ENCODE measurements at regions of chr19 and their contacts with region 1.

Region 1: GRCh38 chr19:9768175-9769112 is at the start of gene ZNF846:
- DNase-seq: peak; percentile 90
- H3K4me3 Mint-ChIP-seq: peak within 1 kb of the TSS; percentile 87
- H3K27ac Mint-ChIP-seq: peak within 1 kb of the TSS; percentile 95
- H3K4me1 Mint-ChIP-seq: peaks cover 8% of the 10 kb centered on the region
- H3K27me3 Mint-ChIP-seq: no peaks in the 10 kb centered on the region
- total RNA-seq, gene ZNF846: 3.2 and 3.7 TPM in 2 replicates

Region 2: GRCh38 chr19:9309139-9309973 is 459.1 kb before region 1 on chr19 and contains the start of gene ZNF699:
- intact Hi-C with region 1: loop called (anchors 1 kb)
- DNase-seq: peak; percentile 98
- H3K4me3 Mint-ChIP-seq: peak within 1 kb of the TSS; percentile 79
- H3K27ac Mint-ChIP-seq: peak within 1 kb of the TSS; percentile 89
- H3K4me1 Mint-ChIP-seq: peaks cover 12% of the 10 kb centered on the region
- H3K27me3 Mint-ChIP-seq: no peaks in the 10 kb centered on the region
- total RNA-seq, gene ZNF699: 4.4 and 5.2 TPM in 2 replicates

Region 3: DNA sequence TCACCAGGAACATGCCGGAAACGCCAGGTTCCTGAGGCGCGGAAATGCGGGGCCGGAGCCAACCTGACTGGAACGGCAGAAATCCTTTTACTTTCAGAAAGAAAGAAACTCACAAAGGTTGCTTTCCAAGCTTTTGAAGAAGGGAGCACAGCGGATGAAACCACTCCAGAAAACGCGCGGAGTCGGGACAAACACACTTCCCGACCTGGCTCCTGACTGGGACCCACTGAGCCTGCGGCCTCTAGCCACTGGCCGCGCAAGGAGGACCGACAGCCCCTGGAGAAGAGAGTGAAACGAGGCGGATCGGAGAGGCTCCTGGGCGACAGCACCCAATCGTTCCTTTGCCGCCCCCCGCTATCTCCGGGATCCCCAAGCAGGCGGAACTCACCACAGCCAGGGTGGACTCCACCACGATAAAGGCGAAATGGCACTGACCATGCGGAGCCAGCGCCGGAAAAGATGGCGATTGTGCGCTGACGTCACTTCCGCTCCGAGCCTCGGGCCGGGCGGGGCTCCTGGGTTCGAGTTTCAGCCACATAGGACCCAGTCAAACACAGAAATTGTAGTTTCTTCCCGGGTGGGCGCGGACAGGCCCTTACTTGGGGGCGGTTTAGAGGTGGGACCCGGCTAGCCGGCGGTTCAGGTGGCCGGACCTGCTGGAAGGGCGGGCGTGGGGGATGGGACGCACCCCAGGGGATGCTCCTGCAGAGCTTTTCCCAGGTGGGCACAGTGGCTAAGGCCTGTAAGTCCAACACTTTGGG is 184.2 kb before region 1 on chr19 and contains the start of gene ZNF121:
- intact Hi-C with region 1: loop called (anchors 10 kb)
- DNase-seq: peak; percentile 77
- H3K4me3 Mint-ChIP-seq: peak within 1 kb of the TSS; percentile 91
- H3K27ac Mint-ChIP-seq: peak within 1 kb of the TSS; percentile 92
- H3K4me1 Mint-ChIP-seq: peaks cover 12% of the 10 kb centered on the region
- H3K27me3 Mint-ChIP-seq: peaks cover 2% of the 10 kb centered on the region
- total RNA-seq, gene ZNF121: 57.2 and 62.2 TPM in 2 replicates

Region 4: DNA sequence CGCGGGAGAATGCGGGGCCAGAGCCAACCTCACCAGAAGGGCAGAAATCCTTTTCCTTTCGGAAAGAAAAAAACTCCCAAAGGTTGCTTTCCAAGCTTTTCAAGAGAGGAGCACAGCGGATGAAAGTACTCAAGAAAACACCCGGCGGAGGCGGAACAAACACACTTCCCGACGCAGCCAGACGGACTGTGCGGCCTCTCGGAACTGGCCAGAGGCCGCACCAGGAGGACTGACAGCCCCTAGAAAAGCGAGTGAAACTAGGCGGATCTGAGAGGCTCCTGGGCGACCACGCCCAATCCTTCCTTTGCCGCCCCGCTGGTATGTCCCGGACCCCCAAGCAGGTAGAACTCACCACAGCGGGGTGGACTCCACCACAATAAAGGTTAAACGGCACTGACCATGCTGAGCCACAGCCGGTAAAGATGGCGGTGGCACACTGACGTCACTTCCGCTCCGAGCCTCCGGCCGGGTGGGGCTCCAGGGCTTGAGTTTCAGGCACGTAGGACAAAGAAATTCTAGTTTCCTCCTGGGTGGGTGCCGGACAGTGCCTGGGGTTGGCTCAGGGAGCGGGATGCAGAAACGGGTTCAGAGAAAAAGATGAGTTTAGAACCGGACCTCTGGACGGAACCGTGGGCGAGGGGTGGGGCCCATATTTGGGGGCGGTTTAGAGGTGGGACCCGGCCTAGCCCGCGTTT is 93.6 kb before region 1 on chr19 and contains the start of gene ZNF562:
- intact Hi-C with region 1: loop called (anchors 2 kb)
- DNase-seq: peak; percentile 70
- H3K4me3 Mint-ChIP-seq: peak within 1 kb of the TSS; percentile 87
- H3K27ac Mint-ChIP-seq: peak within 1 kb of the TSS; percentile 93
- H3K4me1 Mint-ChIP-seq: peaks cover 10% of the 10 kb centered on the region
- H3K27me3 Mint-ChIP-seq: no peaks in the 10 kb centered on the region
- total RNA-seq, gene ZNF562: 17.3 and 18.2 TPM in 2 replicates

Region 5: GRCh38 chr19:9785367-9786331 is 17.2 kb after region 1 on chr19:
- intact Hi-C with region 1: loop called (anchors 1 kb)
- DNase-seq: peak; percentile 92
- H3K4me3 Mint-ChIP-seq: peak overlapping the region; percentile 88
- H3K27ac Mint-ChIP-seq: peak overlapping the region; percentile 86
- H3K4me1 Mint-ChIP-seq: peaks cover 22% of the 10 kb centered on the region
- H3K27me3 Mint-ChIP-seq: no peaks in the 10 kb centered on the region

Region 6: DNA sequence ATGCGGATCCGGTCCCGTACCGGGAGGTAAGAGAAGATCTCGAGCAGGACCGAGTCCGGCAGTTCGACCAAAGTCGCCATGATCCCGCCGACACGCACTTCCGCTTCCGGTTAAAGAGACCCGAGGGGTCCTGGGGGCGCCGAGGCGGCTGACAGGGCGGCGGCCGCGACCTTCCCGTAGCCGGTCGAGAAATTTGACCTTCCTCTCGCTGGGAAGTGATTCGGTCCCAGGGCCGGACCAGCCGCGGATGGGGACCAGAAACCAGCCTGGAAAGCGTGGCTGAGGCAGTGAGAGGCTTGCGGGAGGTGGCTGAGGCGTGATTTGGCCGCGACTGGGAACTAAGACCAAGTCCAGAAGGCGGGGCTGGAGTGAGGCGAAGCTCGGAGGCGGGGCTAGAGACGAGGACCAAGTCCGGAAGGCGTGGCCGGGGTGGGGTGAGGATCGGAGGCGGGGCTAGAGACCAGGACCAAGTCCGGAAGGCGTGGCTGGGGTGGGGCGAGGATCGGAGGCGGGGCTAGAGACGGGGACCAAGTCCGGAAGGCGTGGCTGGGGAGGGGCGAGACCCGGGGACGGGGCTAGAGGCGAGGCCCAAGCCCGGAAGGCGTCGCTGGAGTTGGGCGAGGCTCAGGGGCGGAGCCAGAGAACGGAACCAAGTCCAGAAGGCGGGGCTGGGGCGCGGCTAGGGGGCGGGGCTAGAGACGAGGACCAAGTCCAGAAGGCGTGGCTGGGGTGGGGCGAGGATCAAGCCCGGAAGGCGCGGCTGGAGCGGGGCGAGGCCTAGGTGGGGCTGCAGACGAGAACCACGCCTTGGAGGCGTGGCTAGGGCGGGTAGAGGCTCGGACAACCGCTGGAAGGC is 50.5 kb after region 1 on chr19 and contains the start of gene FBXL12:
- intact Hi-C with region 1: no loop called
- DNase-seq: peak; percentile 100
- H3K4me3 Mint-ChIP-seq: peak within 1 kb of the TSS; percentile 90
- H3K27ac Mint-ChIP-seq: peak within 1 kb of the TSS; percentile 87
- H3K4me1 Mint-ChIP-seq: peaks cover 21% of the 10 kb centered on the region
- H3K27me3 Mint-ChIP-seq: no peaks in the 10 kb centered on the region
- total RNA-seq, gene FBXL12: 23.4 and 23.7 TPM in 2 replicates

Region 7: GRCh38 chr19:9971166-9971897 is 202.9 kb after region 1 on chr19:
- intact Hi-C with region 1: no loop called
- DNase-seq: no peak
- H3K4me3 Mint-ChIP-seq: no peak overlapping the region
- H3K27ac Mint-ChIP-seq: no peak overlapping the region
- H3K4me1 Mint-ChIP-seq: no peaks in the 10 kb centered on the region
- H3K27me3 Mint-ChIP-seq: peaks cover 10% of the 10 kb centered on the region